ENCODE measurements at regions of chr1 and their contacts with region 1.

Region 1: DNA sequence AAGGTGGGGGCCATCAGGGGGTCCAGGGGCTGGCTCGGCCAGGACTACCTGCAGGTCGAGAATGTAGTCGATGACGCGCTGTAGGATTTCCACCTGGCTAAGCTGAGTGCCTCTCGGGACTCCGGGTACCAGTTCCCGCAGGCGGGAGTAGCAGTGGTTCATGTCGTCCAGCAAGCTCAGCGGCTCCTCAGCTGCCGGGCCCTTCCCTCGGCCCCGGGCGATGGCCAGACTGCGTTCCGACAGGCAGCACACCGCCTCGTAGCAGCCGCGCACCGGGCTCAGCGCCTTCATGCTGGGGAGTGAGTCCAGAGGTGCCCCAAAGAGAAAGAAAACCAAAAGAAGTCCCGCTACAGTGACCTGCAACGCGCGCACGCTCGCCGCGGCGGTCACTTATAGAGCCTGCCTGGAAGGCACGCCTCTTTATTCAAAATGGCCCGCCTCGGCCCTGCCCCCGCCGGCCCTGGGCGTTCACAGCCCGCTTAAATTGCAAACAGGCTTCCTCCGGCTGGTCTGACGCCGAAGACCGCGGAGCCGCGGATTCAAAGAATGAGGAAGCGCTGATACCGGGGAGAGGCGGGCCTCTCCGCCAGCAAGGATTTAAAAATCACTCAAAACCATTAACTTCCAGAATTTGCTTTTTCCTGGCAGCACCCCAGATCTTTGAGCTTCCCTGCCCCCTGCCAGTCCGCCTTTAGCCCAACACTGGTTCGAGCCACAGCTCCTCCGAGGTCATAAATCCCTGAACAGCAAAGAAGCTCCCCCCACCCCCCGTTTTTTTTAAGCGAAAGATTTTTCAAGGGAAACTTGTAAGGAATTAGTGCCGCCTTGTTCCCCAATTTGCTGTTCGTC is at the start of gene ID3:
- DNase-seq: peak; percentile 96
- H3K4me3 Mint-ChIP-seq: peak within 1 kb of the TSS; percentile 90
- H3K27ac Mint-ChIP-seq: peak within 1 kb of the TSS; percentile 88
- H3K4me1 Mint-ChIP-seq: peaks cover 71% of the 10 kb centered on the region
- H3K27me3 Mint-ChIP-seq: peaks cover 50% of the 10 kb centered on the region

Region 2: DNA sequence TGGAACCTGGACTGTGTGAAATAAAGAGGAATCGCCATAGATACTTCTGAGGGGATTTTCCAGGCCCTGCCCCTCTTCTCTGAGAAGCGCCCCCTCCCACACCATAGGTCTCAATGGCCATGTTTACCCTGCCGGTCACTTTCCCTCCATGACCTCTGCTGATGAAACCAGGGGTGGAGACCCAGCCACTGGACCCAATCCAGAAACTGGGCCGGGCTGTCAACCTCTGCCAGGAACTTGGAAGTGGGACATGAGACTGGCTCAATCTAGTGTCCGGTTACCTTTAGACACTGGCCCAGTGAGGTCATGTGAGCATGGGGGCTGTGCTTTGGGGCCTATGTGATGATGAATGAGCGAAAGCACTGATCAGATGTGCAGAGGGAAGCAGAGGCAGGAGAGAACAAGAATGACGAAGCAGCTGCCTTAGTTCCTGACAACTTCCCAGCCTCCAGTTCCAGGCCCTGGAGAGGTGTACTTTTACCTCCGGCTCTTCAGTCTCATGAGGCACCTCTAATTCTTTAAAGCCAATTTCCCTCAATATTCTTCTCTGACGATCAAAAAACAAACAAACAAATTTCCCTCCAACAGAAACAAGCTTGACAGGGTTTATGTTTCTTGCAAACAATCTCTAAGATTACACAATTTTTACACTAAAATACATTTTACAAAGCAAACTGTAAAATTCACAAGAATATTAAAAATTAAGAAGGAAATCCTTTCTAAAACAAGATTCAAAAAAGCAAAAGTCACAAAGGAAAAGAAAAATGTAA is 80.3 kb before region 1 on chr1:
- CTCF ChIA-PET with region 1: no interaction called
- DNase-seq: no peak
- H3K4me3 Mint-ChIP-seq: no peak overlapping the region
- H3K27ac Mint-ChIP-seq: no peak overlapping the region
- H3K4me1 Mint-ChIP-seq: peaks cover 9% of the 10 kb centered on the region
- H3K27me3 Mint-ChIP-seq: peaks cover 80% of the 10 kb centered on the region

Region 3: DNA sequence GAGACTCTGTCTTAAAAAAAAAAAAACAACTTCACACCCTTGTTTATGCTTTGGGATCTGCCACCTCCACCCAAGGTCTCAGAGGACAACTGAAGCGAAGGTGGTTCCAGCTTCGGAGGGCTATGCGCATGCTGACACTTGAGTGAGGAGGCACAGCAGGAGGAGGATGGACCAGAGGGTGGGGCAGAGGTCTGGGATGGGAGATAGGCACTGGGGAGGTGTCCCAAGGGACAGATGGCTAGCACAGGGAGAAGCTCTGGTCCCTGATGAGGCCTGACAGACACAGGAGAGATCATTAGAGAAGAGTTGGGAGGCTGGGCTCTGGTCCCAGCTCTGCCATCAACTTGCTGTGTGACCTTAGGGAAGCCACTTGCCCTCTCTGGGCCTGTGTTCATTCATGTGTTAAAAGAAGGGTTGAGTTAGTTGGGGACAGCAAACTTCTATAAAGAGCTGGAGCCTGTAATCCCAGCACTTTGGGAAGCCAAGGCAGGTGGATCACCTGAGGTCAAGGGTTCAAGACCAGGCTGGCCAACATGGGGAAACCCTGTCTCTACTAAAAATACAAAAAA is 45.2 kb before region 1 on chr1:
- CTCF ChIA-PET with region 1: no interaction called
- DNase-seq: no peak
- H3K4me3 Mint-ChIP-seq: no peak overlapping the region
- H3K27ac Mint-ChIP-seq: peak overlapping the region; percentile 56
- H3K4me1 Mint-ChIP-seq: peaks cover 2% of the 10 kb centered on the region
- H3K27me3 Mint-ChIP-seq: no peaks in the 10 kb centered on the region

Region 4: GRCh38 chr1:23539698-23540266 is 19.6 kb before region 1 on chr1:
- CTCF ChIA-PET with region 1: interaction called, 11 read pairs
- DNase-seq: peak; percentile 96
- H3K4me3 Mint-ChIP-seq: no peak overlapping the region
- H3K27ac Mint-ChIP-seq: peak overlapping the region; percentile 63
- H3K4me1 Mint-ChIP-seq: peaks cover 28% of the 10 kb centered on the region
- H3K27me3 Mint-ChIP-seq: peaks cover 4% of the 10 kb centered on the region

Region 5: DNA sequence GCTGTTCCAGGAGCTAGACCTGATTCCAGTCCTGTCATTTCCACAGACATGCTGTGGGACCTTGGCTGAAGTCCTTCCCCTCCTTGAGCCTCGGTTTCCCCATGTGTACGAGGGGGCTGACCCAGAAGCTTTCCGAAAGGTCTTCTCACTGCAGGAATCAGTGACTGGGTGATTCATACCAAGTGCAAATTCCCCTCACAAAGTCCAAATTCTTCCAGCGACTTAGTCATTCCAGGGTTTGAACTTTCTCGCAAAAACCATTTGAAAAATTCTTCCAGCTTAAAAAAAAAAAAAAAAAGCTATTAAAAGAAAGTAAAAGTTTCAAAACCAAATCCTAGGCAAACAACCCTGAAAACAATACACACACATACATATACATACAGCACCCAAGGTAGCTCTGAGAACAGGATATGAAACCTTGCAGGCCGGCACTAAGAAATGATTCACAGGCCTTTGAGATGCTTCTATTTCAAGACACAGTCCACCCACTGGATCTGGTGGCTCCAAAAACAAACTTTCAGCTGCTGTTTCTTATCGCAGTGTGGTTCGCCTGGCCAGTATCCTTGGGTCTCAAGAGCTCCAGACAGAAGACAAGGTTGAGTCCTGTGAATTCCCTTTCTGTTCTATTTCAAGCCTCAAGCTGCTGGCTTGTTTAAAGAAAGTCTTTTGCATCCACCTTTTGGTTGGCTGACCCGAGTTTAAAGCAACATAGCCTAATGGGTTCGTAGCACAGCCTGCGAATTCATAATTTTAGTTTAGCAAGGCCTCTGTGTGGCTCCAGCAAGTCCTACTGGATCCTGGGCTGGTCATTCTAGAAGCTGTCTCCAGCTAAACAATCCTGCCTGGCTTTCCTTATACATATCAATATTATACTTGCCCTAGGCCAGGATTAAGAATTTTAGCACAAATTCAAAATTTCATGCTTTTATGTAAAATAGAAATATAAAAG is 18.0 kb after region 1 on chr1:
- CTCF ChIA-PET with region 1: interaction called, 16 read pairs
- DNase-seq: peak; percentile 68
- H3K4me3 Mint-ChIP-seq: peak overlapping the region; percentile 23
- H3K27ac Mint-ChIP-seq: peak overlapping the region; percentile 94
- H3K4me1 Mint-ChIP-seq: peaks cover 52% of the 10 kb centered on the region
- H3K27me3 Mint-ChIP-seq: peaks cover 16% of the 10 kb centered on the region

Region 6: DNA sequence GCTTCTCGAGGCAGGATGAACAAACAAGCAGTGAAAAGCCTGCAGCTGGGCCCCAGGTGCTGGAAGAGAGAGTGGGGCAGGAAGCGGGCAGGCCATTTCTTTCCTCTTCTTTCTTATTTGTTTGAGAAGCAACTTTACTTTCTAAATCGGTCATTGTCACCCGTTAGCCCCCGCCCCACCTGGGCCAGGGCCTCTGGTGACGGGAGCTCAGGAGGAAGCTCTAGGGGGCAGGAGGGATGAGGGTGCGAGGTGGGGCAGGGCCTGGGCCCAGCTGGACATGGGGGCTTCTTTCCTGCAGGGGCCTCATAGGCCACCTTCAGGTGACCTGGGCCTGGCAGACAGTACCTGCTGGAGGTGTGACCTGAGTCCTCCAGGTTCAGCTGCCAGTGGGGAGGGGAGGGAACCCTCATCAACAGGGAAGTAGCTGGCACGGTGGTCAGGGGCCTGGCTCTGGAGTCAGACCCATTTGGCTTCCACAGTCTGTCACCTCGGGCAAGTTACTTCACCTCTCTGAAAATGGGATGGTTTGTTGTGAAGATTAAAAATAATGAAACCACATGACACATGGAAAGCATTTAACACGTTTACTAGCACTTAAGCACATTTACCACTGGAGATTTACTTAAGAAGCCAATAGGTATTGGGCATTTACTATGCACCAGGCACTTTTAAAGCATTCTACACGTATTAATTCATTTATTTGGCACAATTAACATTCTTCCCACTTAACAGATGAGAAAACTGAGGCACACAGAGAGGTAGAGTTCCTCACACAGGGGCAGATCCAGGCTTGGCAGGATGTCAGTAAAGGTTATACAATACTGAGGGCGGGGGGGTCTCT is 54.1 kb after region 1 on chr1:
- CTCF ChIA-PET with region 1: interaction called, 11 read pairs
- DNase-seq: peak; percentile 83
- H3K4me3 Mint-ChIP-seq: peak overlapping the region; percentile 37
- H3K27ac Mint-ChIP-seq: peak overlapping the region; percentile 98
- H3K4me1 Mint-ChIP-seq: peaks cover 78% of the 10 kb centered on the region
- H3K27me3 Mint-ChIP-seq: peaks cover 1% of the 10 kb centered on the region

Region 7: GRCh38 chr1:23619299-23620188 is 60.2 kb after region 1 on chr1:
- CTCF ChIA-PET with region 1: interaction called, 13 read pairs
- DNase-seq: peak; percentile 88
- H3K4me3 Mint-ChIP-seq: peak overlapping the region; percentile 73
- H3K27ac Mint-ChIP-seq: peak overlapping the region; percentile 96
- H3K4me1 Mint-ChIP-seq: peaks cover 87% of the 10 kb centered on the region
- H3K27me3 Mint-ChIP-seq: no peaks in the 10 kb centered on the region

Region 8: GRCh38 chr1:23854568-23854967 is 295.2 kb after region 1 on chr1:
- CTCF ChIA-PET with region 1: no interaction called
- DNase-seq: peak; percentile 27
- H3K4me3 Mint-ChIP-seq: no peak overlapping the region
- H3K27ac Mint-ChIP-seq: no peak overlapping the region
- H3K4me1 Mint-ChIP-seq: no peaks in the 10 kb centered on the region
- H3K27me3 Mint-ChIP-seq: no peaks in the 10 kb centered on the region

Measured in activated naive CD4-positive, alpha-beta T cell treated with anti-CD3 and anti-CD28 coated beads, Interleukin-2, amount 10 ng/mL, durations not matched to agents 7 days and 5 days (primary cell).